ENCODE measurements at regions of chr5 and their contacts with region 1.

Region 1: DNA sequence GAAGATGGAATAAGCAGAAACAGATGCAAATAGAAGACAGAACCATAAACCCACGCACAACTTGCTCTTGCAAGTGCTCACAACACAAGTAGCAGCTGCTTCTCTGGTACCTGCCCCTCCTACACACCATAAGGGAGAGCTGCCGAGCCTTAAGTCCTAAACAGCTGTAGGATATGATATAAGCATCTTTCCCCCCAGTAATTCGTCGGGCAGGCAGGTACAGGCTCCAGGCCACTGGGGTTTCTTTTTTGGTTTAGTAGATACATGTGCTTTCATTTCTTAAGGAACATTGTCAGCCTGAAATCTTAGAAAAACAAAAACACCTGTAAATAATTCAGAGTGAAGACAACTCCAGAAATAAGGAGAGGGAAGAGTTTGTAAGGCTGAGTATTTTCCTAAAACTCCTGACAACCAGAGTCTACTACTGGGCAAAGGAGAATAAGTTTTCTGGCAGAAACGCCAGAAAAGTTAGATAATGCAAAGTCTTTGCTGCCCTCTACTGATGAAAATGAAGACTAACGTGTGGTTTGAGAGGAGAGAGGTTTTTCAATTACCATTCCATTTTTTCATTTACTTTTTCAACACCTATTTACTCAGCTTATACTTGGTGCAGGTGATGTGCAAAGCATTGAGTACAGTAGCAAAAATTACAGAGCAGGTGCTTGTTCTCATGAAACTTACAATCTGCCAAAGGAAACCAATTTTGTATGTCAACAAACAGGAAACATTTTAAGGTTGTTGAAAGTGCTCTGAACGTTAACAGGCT is 20.1 kb upstream of the TCERG1 start:
- DNase-seq: no peak
- ATAC-seq: peak; percentile 68
- H3K4me3 Mint-ChIP-seq: no peak overlapping the region
- H3K27ac Mint-ChIP-seq: peak overlapping the region; percentile 20
- H3K4me1 Mint-ChIP-seq: peaks cover 9% of the 10 kb centered on the region
- H3K27me3 Mint-ChIP-seq: peaks cover 23% of the 10 kb centered on the region

Region 2: GRCh38 chr5:146410272-146410671 is 16.8 kb before region 1 on chr5:
- CTCF ChIA-PET with region 1: no interaction called
- DNase-seq: no peak
- ATAC-seq: no peak
- H3K4me3 Mint-ChIP-seq: no peak overlapping the region
- H3K27ac Mint-ChIP-seq: no peak overlapping the region
- H3K4me1 Mint-ChIP-seq: no peaks in the 10 kb centered on the region
- H3K27me3 Mint-ChIP-seq: peaks cover 17% of the 10 kb centered on the region

Region 3: DNA sequence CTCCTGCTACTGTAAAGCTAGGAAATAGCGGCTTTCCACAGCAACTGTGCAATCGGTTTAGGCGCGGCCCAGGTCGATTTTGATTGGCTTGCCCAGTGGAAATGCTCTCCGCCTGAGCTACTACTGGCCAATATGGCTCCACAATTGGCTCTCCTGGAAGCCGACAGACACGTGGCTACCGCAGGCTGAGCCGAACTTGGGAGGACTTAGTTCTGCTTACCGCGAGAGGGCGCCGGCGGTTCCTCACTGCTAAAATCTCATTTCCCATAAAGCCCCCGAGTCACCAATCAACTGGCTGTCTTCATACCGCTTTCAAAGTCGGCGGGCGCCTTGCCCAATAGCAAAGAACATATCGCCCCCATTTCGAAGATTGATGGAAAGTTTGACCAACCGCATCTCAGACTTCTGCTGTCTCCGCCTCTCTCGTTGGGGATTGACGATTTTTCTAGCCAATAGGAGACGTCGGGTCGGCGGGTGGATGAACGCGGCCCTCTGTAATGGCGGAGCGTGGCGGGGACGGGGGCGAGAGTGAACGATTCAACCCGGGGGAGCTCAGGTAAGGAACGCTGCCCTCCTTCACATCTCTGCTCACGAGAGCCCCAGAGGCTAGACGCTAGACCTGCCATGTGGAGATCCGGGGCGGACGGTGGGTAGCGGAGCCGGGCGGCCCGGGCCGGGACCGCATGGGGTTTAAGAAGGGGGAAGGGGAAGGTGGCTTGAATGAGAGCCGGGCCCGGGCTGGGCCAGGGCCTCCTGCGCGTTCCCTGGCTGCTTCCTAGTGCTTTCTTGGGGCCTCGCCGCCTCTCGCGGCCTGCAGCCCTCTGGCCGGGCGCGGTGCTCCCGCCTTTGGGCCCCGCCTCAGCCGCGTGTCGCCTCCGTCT is 20.1 kb after region 1 on chr5 and contains the start of gene TCERG1:
- CTCF ChIA-PET with region 1: interaction called, 12 read pairs
- DNase-seq: peak; percentile 99
- ATAC-seq: peak; percentile 94
- H3K4me3 Mint-ChIP-seq: peak within 1 kb of the TSS; percentile 97
- H3K27ac Mint-ChIP-seq: peak within 1 kb of the TSS; percentile 99
- H3K4me1 Mint-ChIP-seq: peaks cover 36% of the 10 kb centered on the region
- H3K27me3 Mint-ChIP-seq: peaks cover 3% of the 10 kb centered on the region
- total RNA-seq, gene TCERG1: 103 to 104 TPM

Region 4: GRCh38 chr5:146491286-146491685 is 64.2 kb after region 1 on chr5:
- CTCF ChIA-PET with region 1: no interaction called
- DNase-seq: no peak
- ATAC-seq: no peak
- H3K4me3 Mint-ChIP-seq: no peak overlapping the region
- H3K27ac Mint-ChIP-seq: no peak overlapping the region
- H3K4me1 Mint-ChIP-seq: no peaks in the 10 kb centered on the region
- H3K27me3 Mint-ChIP-seq: no peaks in the 10 kb centered on the region